ENCODE measurements at regions of chr2 and their contacts with region 1.

Region 1: DNA sequence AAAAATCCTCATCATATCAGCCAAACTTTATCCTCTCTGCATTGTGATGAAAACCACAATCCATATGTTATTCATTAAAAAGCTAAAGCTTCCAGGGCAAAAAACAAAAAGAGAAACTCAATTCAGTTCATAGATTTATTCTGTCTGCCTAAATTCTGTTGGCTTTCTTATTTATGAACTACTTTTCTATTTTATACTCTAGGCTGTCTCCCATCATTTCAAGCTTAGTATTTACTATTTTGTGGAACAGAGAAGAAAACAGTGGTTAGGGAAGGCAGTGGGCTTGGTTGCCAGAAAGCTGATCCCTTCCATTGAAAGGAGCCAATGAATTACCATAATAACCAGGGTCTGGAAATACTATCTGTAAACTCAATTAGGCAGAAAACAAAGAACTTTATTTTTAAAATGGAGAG is 71.8 kb downstream of the RAPH1 start:
- DNase-seq: no peak
- H3K4me3 ChIP-seq: no peak overlapping the region
- H3K27me3 ChIP-seq: no peaks in the 10 kb centered on the region
- CTCF ChIP-seq: no peak

Region 2: GRCh38 chr2:203246646-203247045 is 216.6 kb before region 1 on chr2:
- CTCF ChIA-PET with region 1: no interaction called
- POLR2A ChIA-PET with region 1: interaction called, 10 read pairs
- DNase-seq: no peak
- H3K4me3 ChIP-seq: no peak overlapping the region
- H3K27me3 ChIP-seq: no peaks in the 10 kb centered on the region
- CTCF ChIP-seq: no peak

Measured in BJ (cell line).